ENCODE measurements at regions of chr19 and their contacts with region 1.

Region 1: DNA sequence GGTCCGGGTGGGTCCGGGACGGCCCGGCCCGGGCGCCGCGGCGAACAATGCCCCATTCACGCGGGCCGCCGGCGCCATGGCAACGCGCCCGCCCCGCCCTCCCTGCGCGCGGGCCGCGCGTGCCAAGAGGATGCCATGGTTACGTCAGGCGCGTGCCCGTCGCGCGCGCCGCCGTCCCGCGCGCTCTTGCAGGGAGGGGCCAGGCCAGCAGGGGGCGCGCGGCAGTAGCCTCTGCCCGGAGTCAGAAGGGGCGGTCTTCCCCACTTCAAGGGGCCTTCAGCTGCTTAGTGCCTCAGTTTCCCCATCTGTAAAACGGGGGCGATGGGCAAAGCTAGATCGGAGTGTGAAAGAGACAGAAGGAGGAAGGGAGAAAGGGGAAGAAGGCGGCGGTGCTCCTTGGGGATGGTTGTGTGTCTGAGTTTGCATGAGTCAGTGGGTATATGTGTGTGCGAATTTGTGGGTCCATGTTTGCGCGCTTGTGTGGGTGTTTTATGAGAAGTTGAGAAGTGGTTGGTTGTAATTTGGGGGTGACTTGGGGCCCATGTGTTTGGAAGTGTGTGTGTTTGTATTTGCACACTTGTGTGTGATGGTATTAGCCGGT is 11.6 kb upstream of the NFIX start:
- DNase-seq: peak; percentile 76
- H3K4me3 Mint-ChIP-seq: no peak overlapping the region
- H3K27ac Mint-ChIP-seq: no peak overlapping the region
- H3K4me1 Mint-ChIP-seq: no peaks in the 10 kb centered on the region
- H3K27me3 Mint-ChIP-seq: peaks cover 6% of the 10 kb centered on the region

Region 2: DNA sequence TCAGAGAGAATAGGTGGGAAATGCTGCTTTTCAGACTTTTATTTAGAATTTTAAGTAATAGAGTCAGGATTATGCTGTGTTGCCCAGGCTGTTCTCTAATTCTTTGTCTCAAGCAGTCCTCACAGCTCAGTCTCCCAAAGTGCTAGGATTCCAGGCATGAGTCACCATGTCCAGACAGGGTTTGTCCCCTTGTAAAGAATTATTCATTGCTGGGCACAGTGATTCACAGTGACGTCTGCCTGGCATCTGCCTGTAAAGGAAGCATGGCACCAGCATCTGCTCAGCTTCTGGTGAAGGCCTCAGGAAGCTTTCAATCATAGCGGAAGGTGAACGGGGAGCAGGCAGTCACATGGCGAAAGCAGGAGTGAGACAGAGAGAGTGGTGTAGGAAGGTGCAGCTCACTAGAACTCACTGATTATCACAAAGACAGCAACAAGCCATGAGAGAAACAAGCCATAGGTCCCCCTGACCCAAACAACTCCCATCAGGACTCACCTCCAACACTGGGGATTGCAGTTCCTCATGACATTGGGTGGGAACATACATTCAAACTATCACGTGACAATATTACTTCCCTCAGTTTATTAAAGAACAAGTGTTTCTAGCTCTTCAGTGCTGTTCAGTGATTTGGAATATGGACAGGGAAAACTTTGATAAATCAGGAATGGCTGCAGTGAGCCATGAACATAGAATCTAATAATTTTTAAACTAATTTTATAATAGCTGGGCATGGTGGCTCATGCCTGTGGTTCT is 1000.9 kb before region 1 on chr19:
- intact Hi-C with region 1: no loop called
- DNase-seq: no peak
- H3K4me3 Mint-ChIP-seq: no peak overlapping the region
- H3K27ac Mint-ChIP-seq: no peak overlapping the region
- H3K4me1 Mint-ChIP-seq: peaks cover 6% of the 10 kb centered on the region
- H3K27me3 Mint-ChIP-seq: no peaks in the 10 kb centered on the region

Region 3: GRCh38 chr19:12965017-12965811 is 18.4 kb before region 1 on chr19:
- intact Hi-C with region 1: loop called (anchors 2 kb)
- DNase-seq: peak; percentile 75
- H3K4me3 Mint-ChIP-seq: peak overlapping the region; percentile 84
- H3K27ac Mint-ChIP-seq: peak overlapping the region; percentile 84
- H3K4me1 Mint-ChIP-seq: peaks cover 16% of the 10 kb centered on the region
- H3K27me3 Mint-ChIP-seq: peaks cover 5% of the 10 kb centered on the region

Region 4: GRCh38 chr19:13002166-13002898 is 18.7 kb after region 1 on chr19:
- intact Hi-C with region 1: no loop called
- DNase-seq: no peak
- H3K4me3 Mint-ChIP-seq: no peak overlapping the region
- H3K27ac Mint-ChIP-seq: no peak overlapping the region
- H3K4me1 Mint-ChIP-seq: no peaks in the 10 kb centered on the region
- H3K27me3 Mint-ChIP-seq: peaks cover 6% of the 10 kb centered on the region

Region 5: GRCh38 chr19:13012690-13013608 is 29.3 kb after region 1 on chr19:
- intact Hi-C with region 1: loop called (anchors 2 kb)
- DNase-seq: no peak
- H3K4me3 Mint-ChIP-seq: peak overlapping the region; percentile 79
- H3K27ac Mint-ChIP-seq: peak overlapping the region; percentile 85
- H3K4me1 Mint-ChIP-seq: peaks cover 23% of the 10 kb centered on the region
- H3K27me3 Mint-ChIP-seq: peaks cover 72% of the 10 kb centered on the region

Region 6: GRCh38 chr19:13033819-13034611 is 50.4 kb after region 1 on chr19:
- intact Hi-C with region 1: loop called (anchors 1 kb)
- DNase-seq: no peak
- H3K4me3 Mint-ChIP-seq: no peak overlapping the region
- H3K27ac Mint-ChIP-seq: no peak overlapping the region
- H3K4me1 Mint-ChIP-seq: no peaks in the 10 kb centered on the region
- H3K27me3 Mint-ChIP-seq: peaks cover 9% of the 10 kb centered on the region

Region 7: DNA sequence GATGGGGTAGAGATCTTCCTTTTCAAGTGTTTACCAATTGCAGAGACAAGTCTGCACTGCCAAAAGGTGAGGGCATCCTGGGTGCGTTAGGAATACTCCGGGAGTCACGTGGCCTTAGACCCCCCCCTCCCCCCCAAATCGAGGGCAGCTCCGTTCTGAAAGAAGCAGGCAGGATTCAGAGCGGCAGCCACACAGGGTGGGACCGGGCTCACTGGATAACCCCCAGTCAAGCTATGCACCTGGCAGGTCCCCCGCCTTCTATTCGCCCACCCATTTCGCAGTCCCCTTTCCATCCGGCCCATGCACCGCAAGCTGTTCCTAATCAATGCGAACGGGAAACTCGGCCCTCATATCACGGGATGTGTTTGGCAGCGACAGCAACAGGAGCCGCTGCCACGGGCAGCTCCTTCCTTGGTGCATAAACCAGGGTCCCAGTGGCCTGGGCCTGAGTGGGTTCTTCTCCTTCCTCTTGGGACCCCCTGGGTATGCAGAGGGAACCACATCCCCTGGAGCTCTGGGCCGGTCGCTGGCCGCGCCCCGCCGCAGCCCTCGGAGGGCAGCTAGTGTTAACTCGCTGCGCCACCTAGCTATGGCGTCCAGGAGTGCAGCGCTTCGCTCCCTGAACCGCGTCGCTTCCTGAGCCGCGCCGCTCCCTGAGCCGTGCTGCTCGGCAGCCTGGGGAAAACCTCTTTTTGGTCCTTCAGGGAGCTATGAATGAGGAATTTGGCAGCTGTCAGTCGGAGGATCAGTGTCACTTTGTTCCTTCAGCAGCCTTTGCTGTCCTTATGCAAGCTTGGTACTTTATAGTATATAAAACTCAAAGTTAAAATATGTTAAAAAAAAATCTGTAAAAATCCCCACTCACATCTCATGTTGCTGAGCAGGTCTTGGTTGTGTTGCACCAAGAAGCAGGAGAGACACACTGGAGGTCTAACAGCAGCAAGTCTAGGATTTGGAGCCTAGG is 77.6 kb after region 1 on chr19:
- intact Hi-C with region 1: loop called (anchors 1 kb)
- DNase-seq: peak; percentile 68
- H3K4me3 Mint-ChIP-seq: peak overlapping the region; percentile 62
- H3K27ac Mint-ChIP-seq: no peak overlapping the region
- H3K4me1 Mint-ChIP-seq: peaks cover 6% of the 10 kb centered on the region
- H3K27me3 Mint-ChIP-seq: peaks cover 25% of the 10 kb centered on the region

Region 8: DNA sequence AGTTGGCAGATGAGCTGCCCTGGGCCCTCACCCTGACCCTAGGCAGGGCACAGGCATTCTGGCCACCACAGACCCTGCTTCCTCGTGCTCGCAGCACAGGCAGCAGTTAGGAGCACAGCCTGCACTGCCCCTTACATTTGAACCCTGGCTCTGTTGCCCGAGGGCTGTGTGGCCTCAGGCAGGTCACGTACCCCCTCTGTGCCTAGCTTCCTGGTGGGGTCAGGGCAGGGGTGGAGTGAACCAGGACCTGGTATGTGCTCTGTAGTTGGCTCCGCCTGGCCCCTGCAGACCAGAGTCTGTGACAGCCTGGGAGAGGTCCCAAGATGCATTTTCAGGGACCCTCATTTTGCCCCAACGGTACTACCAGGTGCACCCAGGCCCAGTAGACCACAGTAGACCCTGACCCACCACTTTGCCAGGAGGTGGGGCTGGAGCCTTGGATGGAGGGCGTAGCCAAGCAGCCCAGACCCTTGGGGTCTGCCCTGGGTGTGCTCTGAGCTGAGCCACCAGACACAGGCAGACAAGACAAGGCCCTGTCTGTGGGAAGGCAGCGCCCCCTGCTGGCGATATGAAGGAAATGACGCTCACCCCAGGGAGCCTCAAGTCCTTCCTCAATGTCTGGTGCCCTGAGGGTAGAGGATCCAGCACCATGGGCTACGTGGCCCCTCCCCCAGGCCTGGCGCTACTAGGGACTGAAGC is 109.9 kb after region 1 on chr19:
- intact Hi-C with region 1: loop called (anchors 1 kb)
- DNase-seq: peak; percentile 63
- H3K4me3 Mint-ChIP-seq: no peak overlapping the region
- H3K27ac Mint-ChIP-seq: no peak overlapping the region
- H3K4me1 Mint-ChIP-seq: peaks cover 12% of the 10 kb centered on the region
- H3K27me3 Mint-ChIP-seq: peaks cover 19% of the 10 kb centered on the region

Region 9: DNA sequence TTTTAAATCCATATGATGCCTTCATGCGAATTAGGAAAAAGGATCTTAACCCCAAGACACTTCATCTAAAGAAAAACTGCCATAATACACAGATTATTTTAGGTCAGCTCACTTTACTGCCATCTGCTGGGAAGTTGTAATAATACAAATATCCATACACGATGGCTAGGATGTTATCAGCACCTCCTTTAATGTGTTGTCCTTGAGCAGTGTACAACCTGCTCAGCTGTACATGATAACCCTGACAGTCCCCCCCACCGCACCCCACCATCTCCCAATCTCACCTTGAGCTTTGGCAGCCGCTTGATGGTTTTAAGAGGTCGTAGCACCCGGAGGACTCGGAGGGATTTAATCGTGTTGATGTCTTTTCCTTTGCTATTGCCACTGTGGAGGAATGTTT is 278.8 kb after region 1 on chr19:
- intact Hi-C with region 1: loop called (anchors 1 kb)
- DNase-seq: peak; percentile 8
- H3K4me3 Mint-ChIP-seq: no peak overlapping the region
- H3K27ac Mint-ChIP-seq: no peak overlapping the region
- H3K4me1 Mint-ChIP-seq: peaks cover 17% of the 10 kb centered on the region
- H3K27me3 Mint-ChIP-seq: peaks cover 17% of the 10 kb centered on the region